ENCODE measurements at regions of chr5 and their contacts with region 1.

Region 1: DNA sequence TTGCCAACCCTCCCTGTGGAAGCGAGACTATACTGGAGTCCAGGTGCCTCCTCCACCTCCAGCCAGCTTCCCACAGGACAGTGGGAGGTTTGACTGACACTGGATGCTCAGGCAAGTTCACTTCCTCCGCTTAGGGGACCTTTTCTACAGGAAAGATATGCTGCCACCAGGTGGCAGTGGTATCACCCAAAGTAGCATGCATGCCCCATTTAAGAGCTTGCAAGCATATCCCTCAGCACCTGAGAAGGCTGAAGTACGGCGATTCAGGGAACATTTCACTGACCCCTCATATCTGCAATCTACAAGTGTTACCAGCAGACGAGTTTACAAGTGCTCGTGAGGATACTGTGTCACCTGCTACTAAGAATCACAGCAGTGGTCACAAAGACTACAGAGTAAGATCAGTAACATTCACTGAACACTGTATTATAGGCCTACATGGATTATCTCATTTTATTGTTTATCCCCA is 75.5 kb downstream of the KLHL3 start:
- H3K4me3 ChIP-seq: no peak overlapping the region
- H3K27ac ChIP-seq: no peak overlapping the region
- H3K4me1 ChIP-seq: 0 out of 2 replicates have a peak, but pooled peaks cover 2% of the 10 kb centered on the region
- CTCF ChIP-seq: peak; percentile 69

Region 2: DNA sequence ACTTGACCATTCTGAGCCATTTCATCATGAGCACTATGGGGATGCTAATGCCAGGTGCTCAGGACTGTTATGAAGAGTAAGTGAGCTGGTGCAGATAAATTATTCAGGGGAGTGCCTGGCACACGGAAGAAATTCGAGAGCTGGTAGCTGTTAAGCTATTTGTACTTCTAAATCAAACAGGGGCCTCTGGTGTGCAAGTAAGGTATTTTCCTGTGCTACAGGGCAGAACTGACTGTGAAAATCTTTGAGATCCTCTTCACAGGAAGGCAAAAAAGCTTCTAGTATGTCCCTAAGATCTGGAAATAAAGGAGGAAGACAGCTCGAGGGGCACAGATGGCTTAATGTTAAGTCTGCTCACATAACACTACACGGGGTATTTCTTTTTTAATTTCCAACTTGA is 55.0 kb before region 1 on chr5:
- CTCF ChIA-PET with region 1: no interaction called
- POLR2A ChIA-PET with region 1: no interaction called
- H3K4me3 ChIP-seq: no peak overlapping the region
- H3K27ac ChIP-seq: no peak overlapping the region
- H3K4me1 ChIP-seq: no peaks in the 10 kb centered on the region
- CTCF ChIP-seq: peak; percentile 27; the same call in 1 of the 2 replicates

Region 3: GRCh38 chr5:137629646-137630045 is 30.7 kb before region 1 on chr5:
- CTCF ChIA-PET with region 1: interaction called, 37 read pairs
- POLR2A ChIA-PET with region 1: no interaction called
- H3K4me3 ChIP-seq: no peak overlapping the region
- H3K27ac ChIP-seq: no peak overlapping the region
- H3K4me1 ChIP-seq: no peaks in the 10 kb centered on the region
- CTCF ChIP-seq: peak; percentile 86

Region 4: DNA sequence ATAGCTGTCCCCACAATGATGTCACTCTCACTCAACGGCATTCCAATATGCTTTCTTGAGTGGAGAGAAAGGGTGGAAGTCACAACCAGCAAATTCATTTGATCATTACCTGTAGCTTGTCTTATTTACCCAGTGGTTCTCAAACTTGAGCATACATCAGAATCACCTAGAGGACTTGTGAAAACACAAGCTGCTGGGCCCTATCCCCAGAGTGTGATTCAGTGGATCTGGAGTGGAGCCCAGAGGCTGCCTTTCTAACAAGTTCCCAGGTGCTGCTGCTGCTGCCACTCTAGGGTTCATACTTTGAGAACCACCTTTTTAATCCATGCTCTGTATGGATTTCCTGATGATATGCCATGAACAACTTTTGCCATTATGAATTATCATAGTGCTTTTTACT is 19.2 kb before region 1 on chr5:
- CTCF ChIA-PET with region 1: interaction called, 37 read pairs
- POLR2A ChIA-PET with region 1: no interaction called
- H3K4me3 ChIP-seq: no peak overlapping the region
- H3K27ac ChIP-seq: no peak overlapping the region
- H3K4me1 ChIP-seq: no peaks in the 10 kb centered on the region
- CTCF ChIP-seq: no peak

Region 5: GRCh38 chr5:137672019-137672418 is 11.6 kb after region 1 on chr5:
- CTCF ChIA-PET with region 1: interaction called, 40 read pairs
- POLR2A ChIA-PET with region 1: no interaction called
- H3K4me3 ChIP-seq: no peak overlapping the region
- H3K27ac ChIP-seq: no peak overlapping the region
- H3K4me1 ChIP-seq: no peaks in the 10 kb centered on the region
- CTCF ChIP-seq: no peak

Region 6: DNA sequence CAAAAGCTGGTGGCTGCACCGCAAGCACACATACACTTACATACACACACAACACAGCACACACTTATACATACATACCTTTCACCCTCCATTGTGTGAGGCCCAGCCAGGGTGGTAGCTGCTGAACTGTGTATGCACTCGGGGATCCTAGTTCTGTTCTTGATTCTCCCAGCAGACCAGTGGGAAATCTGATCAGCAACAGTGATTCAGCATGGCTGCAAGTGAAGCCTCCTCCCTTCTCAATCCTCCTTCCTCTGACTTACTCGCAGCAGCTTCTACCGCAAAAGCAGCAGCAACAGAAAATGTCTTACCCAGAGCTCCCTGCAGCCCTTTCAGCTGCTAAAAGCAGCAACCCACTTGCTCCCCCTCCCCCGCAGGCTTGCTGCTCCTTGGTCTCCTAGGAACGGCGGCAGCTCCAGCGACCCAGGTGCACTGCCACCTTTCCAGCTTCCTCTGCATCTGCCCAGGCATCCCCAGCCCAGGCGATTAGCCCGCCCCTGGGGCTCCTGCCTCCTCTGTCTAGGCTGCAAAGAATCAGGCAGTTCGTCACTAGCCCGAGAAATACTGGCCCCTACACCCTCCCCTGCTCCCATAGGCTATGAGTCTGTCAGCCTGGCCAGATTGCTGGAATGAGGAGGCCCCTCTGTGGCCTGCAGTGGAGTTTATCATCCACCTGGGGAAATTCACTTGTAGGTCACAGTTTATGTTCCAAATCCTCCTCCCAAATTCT is 75.3 kb after region 1 on chr5 and contains the start of gene KLHL3:
- CTCF ChIA-PET with region 1: interaction called, 201 read pairs
- POLR2A ChIA-PET with region 1: no interaction called
- H3K4me3 ChIP-seq: peak within 1 kb of the TSS; percentile 1
- H3K27ac ChIP-seq: no peak within 1 kb of the TSS
- H3K4me1 ChIP-seq: 0 out of 2 replicates have a peak, but pooled peaks cover 6% of the 10 kb centered on the region
- CTCF ChIP-seq: peak; percentile 69; the same call in 1 of the 2 replicates

Region 7: DNA sequence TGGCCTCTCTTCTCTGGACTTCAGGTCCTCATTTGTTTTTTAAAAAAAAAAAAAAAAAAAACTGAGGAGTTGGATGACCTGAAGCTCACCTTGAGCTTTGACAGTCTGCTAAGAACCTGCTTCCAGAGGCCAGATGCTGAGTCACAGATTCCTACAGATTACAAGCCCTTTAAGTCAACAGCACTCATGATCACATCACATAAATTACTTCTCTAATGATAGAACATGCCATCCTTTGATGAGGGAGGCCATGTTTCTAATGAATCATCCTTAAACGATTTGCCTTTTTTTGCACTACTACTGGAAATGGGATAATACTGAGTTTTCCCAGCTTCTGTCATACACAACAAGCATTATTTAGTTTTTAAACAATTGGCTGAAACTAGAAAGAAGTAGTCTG is 173.1 kb after region 1 on chr5:
- CTCF ChIA-PET with region 1: no interaction called
- POLR2A ChIA-PET with region 1: no interaction called
- H3K4me3 ChIP-seq: no peak overlapping the region
- H3K27ac ChIP-seq: no peak overlapping the region
- H3K4me1 ChIP-seq: peaks cover 22% of the 10 kb centered on the region; the same call in 1 of the 2 replicates
- CTCF ChIP-seq: no peak